ENCODE measurements at regions of chr4 and their contacts with region 1.

Region 1: DNA sequence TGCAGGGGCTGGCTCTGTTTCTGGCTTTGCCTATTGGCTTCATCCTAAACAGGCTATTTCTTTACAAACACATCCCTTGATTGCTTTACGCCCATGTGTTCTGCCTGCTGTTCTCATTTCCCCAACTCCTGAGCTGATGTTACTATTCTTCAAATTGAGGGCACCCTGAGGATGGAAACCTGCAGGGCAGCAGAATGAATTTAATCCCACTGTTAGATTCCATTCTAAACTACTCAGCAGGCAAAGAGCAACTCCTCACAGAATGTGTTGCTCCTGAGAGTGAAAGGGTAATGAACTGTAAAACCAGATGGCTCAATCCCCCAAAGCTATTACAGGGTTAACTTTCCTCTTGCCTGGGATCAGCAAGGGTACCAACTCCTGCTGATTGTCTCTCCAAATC is 75.7 kb downstream of the ANKRD50 start:
- DNase-seq: peak; percentile 87
- H3K4me3 ChIP-seq: no peak overlapping the region
- H3K27ac ChIP-seq: peak overlapping the region; percentile 2
- H3K4me1 ChIP-seq: peaks cover 23% of the 10 kb centered on the region
- H3K27me3 ChIP-seq: no peaks in the 10 kb centered on the region
- CTCF ChIP-seq: no peak

Region 2: GRCh38 chr4:124427095-124427767 is 209.6 kb before region 1 on chr4:
- CTCF ChIA-PET with region 1: no interaction called
- POLR2A ChIA-PET with region 1: no interaction called
- intact Hi-C with region 1: loop called (anchors 5 kb)
- DNase-seq: no peak
- H3K4me3 ChIP-seq: no peak overlapping the region
- H3K27ac ChIP-seq: no peak overlapping the region
- H3K4me1 ChIP-seq: peaks cover 39% of the 10 kb centered on the region
- H3K27me3 ChIP-seq: no peaks in the 10 kb centered on the region
- CTCF ChIP-seq: no peak